ENCODE measurements at regions of chr10 and their contacts with region 1.

Region 1: DNA sequence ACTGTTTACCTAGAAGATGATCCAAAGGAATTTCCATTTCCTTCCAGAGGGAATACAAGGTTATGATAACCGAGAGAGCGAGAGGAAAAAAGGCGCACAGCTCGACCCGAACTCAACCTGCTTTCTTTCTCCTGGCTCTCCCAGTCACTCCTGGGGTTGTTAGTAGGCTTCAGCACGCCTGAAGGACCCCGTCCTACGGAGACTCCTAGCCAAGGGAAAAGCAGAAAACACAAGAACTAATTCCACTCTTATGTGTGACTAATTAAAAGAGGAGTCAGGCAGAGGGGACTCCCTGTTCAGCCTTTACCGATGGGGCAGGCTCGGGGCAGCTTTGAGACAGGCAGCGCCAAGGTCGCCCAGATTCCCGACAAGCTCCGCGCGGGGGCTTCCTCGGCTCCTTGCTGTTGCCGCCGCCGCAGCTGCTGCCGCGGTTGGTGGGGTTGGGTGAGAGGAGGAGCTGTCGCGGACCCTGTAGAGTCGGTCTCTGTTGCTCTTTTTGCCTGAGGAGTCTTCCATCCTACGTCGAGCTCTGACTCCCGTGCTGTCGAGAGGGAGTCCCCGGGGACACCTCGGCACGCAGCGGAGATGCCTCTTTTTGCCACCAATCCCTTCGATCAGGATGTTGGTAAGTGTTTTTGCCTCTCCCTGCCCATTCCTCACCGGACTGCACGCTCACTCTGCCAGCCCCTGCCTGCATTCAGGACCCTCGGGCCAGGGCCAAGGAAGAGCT is at the start of gene STAM:
- DNase-seq: peak; percentile 96
- total RNA-seq, gene STAM: 40.8 TPM

Region 2: GRCh38 chr10:17737027-17737965 is 93.4 kb after region 1 on chr10:
- intact Hi-C with region 1: loop called (anchors 10 kb)
- DNase-seq: no peak

Measured in cardiac septum (tissue), 1 donor.